Kidney (tissue), 22 donors: ENCODE measurements at regions of chr5 and their contacts with region 1.

Region 1: GRCh38 chr5:32585446-32586275 is at the start of gene SUB1:
- DNase-seq: peak; percentile 94 to 98 (median 97)
- H3K4me3 ChIP-seq: peak within 1 kb of the TSS; percentile 91 to 95 (median 94)
- H3K27ac ChIP-seq: peak within 1 kb of the TSS; percentile 98 to 99
- H3K4me1 ChIP-seq: peaks cover 0 to 7% (median 6%) of the 10 kb centered on the region in 3 donors
- H3K27me3 ChIP-seq: no peaks in the 10 kb centered on the region
- CTCF ChIP-seq: peak; percentile 16
- total RNA-seq, gene SUB1: 167 TPM

Region 2: DNA sequence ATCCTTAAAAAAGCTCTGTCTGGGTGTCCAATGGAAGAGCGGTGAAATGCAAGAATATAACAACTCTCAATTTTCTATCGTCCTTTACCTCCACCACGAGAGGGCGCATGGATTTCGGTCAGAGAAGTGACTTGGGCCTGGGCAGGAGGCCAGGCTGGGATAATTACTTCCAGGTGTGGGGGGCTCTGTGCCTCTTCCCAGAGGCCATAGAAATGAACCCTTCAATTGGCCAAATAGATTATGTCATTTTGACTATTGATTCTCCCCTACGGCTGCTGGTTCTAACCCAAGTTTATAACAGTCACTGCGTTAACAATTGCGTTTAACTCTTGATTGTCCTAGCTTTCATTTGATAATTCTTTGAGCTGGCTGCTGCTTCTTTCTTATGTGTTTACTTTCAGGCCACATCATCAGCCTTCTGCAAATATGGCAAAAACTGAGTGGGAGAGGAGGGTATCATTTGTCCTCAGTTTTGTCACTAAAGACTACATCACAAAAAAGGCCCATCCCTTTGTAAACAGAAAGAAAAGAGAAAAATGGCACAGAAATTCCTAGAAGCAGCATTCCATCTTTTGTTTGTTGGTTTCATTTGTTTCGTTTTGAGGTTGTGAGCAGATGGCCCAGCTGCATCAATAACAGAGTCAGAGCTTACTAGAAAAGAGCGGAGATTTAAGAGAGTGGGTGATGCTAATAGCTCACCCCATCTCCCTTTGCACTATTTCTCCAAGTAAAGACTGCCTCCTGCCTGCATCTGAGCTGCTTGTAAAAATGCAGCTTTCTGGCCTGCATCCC is 95.7 kb before region 1 on chr5:
- intact Hi-C with region 1: loop called (anchors 10 kb)
- DNase-seq: peak; percentile 75 to 95 (median 80)
- H3K4me3 ChIP-seq: peak overlapping the region in 1 of 3 donors; percentile 12
- H3K27ac ChIP-seq: no peak overlapping the region
- H3K4me1 ChIP-seq: peaks cover 0 to 2% (median 0%) of the 10 kb centered on the region in 3 donors
- H3K27me3 ChIP-seq: no peaks in the 10 kb centered on the region
- CTCF ChIP-seq: peak; percentile 76

Region 3: DNA sequence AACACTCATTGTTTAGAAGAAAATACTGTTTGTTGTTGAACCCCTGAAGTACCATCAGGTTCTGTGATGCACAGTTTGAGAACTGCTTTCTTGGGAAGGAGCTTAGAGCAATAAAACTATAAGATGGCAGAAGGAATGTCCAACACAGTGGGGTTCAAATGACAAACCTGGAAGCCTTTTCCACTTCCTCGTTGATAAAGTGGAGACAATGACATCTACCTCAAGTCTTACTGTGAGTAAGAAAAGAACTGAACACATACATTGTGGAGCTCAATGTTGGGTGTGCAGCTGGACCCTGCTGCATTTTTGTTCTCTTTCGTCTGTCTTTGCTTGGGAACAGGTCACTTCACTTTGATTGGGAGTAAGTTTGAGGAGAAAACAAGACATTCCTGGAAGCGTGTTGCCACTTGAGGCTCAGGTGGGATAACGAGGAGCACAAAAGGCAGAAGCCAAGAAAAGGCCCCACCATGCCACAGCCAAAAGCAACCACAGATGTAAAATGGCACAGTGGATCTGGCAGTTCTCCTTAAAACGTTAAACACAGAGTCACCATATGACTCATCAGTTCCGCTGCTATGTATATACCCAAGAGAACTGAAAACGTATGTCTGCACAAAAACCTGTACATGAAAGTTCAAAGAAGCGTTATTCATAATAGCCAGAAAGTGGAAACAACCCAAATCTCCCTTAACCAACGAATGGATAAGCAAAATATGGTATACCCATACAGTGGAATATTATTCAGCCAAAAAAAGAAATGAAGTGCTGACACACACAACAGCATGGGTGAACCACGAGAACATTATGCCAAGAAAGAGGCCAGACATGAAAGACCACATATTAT is 43.2 kb before region 1 on chr5:
- intact Hi-C with region 1: no loop called
- DNase-seq: no peak
- H3K4me3 ChIP-seq: no peak overlapping the region
- H3K27ac ChIP-seq: no peak overlapping the region
- H3K4me1 ChIP-seq: no peaks in the 10 kb centered on the region
- H3K27me3 ChIP-seq: no peaks in the 10 kb centered on the region
- CTCF ChIP-seq: no peak

Region 4: GRCh38 chr5:32709781-32710549 is 124.3 kb after region 1 on chr5:
- intact Hi-C with region 1: no loop called
- DNase-seq: peak; percentile 76 to 93 (median 90)
- H3K4me3 ChIP-seq: peak overlapping the region; percentile 69 to 86 (median 85)
- H3K27ac ChIP-seq: peak overlapping the region; percentile 82 to 86
- H3K4me1 ChIP-seq: peaks cover 0 to 11% (median 2%) of the 10 kb centered on the region in 3 donors
- H3K27me3 ChIP-seq: peaks cover 6% of the 10 kb centered on the region
- CTCF ChIP-seq: peak; percentile 51

Region 5: GRCh38 chr5:32932241-32932935 is 346.7 kb after region 1 on chr5:
- intact Hi-C with region 1: no loop called
- DNase-seq: peak in 1 of 5 donors; percentile 9
- H3K4me3 ChIP-seq: no peak overlapping the region
- H3K27ac ChIP-seq: no peak overlapping the region
- H3K4me1 ChIP-seq: no peaks in the 10 kb centered on the region
- H3K27me3 ChIP-seq: no peaks in the 10 kb centered on the region
- CTCF ChIP-seq: no peak